ENCODE measurements at regions of chr11 and their contacts with region 1.

Region 1: GRCh38 chr11:108222686-108223448 is at the start of gene ATM:
- DNase-seq: peak; percentile 99
- ATAC-seq: peak; percentile 77
- H3K4me3 Mint-ChIP-seq: no peak within 1 kb of the TSS
- H3K27ac Mint-ChIP-seq: no peak within 1 kb of the TSS
- H3K4me1 Mint-ChIP-seq: peaks cover 50% of the 10 kb centered on the region
- H3K27me3 Mint-ChIP-seq: no peaks in the 10 kb centered on the region
- total RNA-seq, gene ATM: 32.8 to 36.1 TPM

Region 2: GRCh38 chr11:107858217-107859070 is 364.4 kb before region 1 on chr11 and contains the start of gene SLC35F2:
- CTCF ChIA-PET with region 1: no interaction called
- POLR2A ChIA-PET with region 1: no interaction called
- intact Hi-C with region 1: loop called in 1 of 2 experiments (anchors 5 kb)
- DNase-seq: peak; percentile 86
- ATAC-seq: peak; percentile 88
- H3K4me3 Mint-ChIP-seq: peak within 1 kb of the TSS; percentile 92
- H3K27ac Mint-ChIP-seq: peak within 1 kb of the TSS; percentile 94
- H3K4me1 Mint-ChIP-seq: peaks cover 31% of the 10 kb centered on the region
- H3K27me3 Mint-ChIP-seq: no peaks in the 10 kb centered on the region
- total RNA-seq, gene SLC35F2: 24.5 to 25.5 TPM

Region 3: DNA sequence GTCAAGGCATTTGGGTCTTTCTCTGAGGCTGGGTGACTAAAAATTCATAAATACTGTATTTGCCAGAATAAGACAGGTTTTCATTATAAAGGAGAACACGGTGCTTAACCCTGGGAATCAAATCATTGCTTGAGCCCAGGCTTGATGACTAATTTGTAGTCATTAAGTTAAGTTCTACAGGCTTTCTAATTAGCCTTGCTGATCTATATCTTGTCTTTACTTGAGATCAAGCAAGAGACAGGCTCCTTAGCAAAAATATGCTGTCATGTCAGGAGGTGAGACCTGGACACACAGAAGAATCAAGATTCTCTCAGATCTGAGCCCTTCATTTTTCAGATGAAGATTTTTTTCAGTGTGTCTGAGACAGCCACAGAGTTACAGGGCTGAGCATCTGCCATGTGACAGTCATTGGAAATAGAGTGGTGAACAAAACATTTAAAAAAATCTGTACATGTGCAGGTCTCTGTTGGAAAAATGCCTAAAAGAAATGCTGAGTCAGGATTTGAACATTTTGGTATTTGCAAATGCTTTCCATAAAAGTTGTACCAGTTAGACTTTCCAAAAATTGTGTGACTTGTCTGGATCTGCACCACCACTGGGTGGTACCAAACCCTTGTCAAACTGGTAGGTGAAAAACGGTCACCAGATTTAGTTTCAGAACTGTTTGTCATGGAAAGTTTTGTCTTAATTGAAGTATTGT is 86.9 kb before region 1 on chr11:
- CTCF ChIA-PET with region 1: no interaction called
- POLR2A ChIA-PET with region 1: no interaction called
- intact Hi-C with region 1: loop called (anchors 1 to 2 kb)
- DNase-seq: peak; percentile 60
- ATAC-seq: peak; percentile 60
- H3K4me3 Mint-ChIP-seq: no peak overlapping the region
- H3K27ac Mint-ChIP-seq: peak overlapping the region; percentile 80
- H3K4me1 Mint-ChIP-seq: peaks cover 26% of the 10 kb centered on the region
- H3K27me3 Mint-ChIP-seq: no peaks in the 10 kb centered on the region

Region 4: DNA sequence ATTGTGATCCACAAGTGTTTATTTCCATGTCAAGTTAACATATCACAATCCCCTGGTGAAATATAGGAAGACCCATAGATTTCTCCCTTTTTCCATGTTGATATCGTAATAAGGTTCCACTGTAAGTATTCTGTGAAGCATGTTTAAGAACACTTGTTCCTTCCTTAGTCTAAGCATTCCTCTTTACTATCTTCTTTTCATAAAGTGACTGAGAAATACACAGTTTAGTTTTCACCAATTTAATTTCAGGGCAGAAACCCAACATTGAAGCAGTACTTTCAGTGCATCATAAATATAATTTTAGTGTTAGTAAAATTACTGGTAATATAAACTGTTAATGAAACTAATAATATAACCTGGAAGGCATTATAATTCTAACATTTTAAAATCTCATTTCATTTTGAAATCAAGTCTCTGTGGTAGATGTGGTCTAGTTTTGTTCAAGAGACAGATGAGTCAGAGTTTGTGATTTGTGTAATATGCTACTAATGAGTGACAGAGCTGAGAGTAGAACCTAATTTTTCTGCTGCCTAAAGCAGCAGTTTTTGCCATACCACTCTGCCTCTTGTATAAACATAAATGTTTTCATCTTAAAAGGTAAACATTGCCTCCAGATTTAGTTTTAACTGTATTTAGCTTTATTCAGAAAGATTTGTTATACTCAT is 79.4 kb after region 1 on chr11:
- CTCF ChIA-PET with region 1: no interaction called
- POLR2A ChIA-PET with region 1: no interaction called
- intact Hi-C with region 1: loop called (anchors 1 to 2 kb)
- DNase-seq: no peak
- ATAC-seq: peak; percentile 94
- H3K4me3 Mint-ChIP-seq: no peak overlapping the region
- H3K27ac Mint-ChIP-seq: no peak overlapping the region
- H3K4me1 Mint-ChIP-seq: peaks cover 33% of the 10 kb centered on the region
- H3K27me3 Mint-ChIP-seq: no peaks in the 10 kb centered on the region

Region 5: DNA sequence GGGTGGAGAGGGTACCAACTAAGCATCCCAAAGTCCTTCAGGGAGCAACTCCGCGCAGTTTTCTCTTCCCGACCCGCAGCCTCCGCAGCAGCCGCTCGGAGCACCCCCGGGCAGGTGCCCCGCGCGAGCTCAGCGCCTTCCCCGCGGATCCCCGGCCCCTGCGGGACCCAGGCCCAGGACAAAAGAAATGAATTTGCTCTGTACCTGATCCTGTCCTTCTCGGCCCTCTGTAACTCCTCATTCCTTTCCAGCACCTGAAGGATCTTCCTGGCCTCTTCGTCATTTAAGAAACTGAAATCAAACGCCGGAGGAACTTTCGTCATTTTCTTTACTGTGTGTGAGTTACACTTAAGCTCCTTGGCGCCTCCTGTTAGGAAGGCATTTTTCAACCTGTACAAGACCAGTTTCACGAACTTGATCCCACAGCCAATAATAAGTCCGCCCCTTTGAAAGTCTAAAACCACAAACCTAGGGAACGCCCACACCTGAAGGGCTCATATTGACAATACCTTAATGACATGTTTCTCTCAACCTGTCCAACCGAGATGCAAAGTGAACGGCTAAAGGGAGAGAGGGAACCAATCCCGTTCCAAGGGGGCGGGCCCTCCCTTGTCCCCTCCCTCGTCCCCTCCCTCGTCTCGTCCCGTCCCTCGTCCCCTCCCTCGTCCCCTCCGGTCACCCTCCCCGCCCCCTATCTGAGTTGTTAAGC is 370.5 kb after region 1 on chr11 and contains the start of gene EXPH5:
- CTCF ChIA-PET with region 1: no interaction called
- POLR2A ChIA-PET with region 1: no interaction called
- intact Hi-C with region 1: loop called (anchors 1 to 5 kb)
- DNase-seq: peak; percentile 92
- ATAC-seq: peak; percentile 99
- H3K4me3 Mint-ChIP-seq: peak within 1 kb of the TSS; percentile 94
- H3K27ac Mint-ChIP-seq: peak within 1 kb of the TSS; percentile 98
- H3K4me1 Mint-ChIP-seq: peaks cover 15% of the 10 kb centered on the region
- H3K27me3 Mint-ChIP-seq: peaks cover 21% of the 10 kb centered on the region
- total RNA-seq, gene EXPH5: 2.0 to 2.4 TPM

Region 6: GRCh38 chr11:108664730-108665525 is 442.1 kb after region 1 on chr11 and contains the start of gene DDX10:
- CTCF ChIA-PET with region 1: no interaction called
- POLR2A ChIA-PET with region 1: interaction called, 3 read pairs
- intact Hi-C with region 1: loop called (anchors 1 kb)
- DNase-seq: peak; percentile 99
- ATAC-seq: peak; percentile 99
- H3K4me3 Mint-ChIP-seq: peak within 1 kb of the TSS; percentile 99
- H3K27ac Mint-ChIP-seq: peak within 1 kb of the TSS; percentile 91
- H3K4me1 Mint-ChIP-seq: peaks cover 37% of the 10 kb centered on the region
- H3K27me3 Mint-ChIP-seq: no peaks in the 10 kb centered on the region
- total RNA-seq, gene DDX10: 45.8 to 50.9 TPM